B cell (primary cell): ENCODE measurements at regions of chr14 and their contacts with region 1.

Region 1: GRCh38 chr14:81220830-81221578 is at the start of gene GTF2A1:
- DNase-seq: peak; percentile 99
- ATAC-seq: peak; percentile 70
- H3K4me3 ChIP-seq: peak within 1 kb of the TSS; percentile 89 to 99 (median 97)
- H3K4me3 Mint-ChIP-seq: peak within 1 kb of the TSS; percentile 97
- H3K27ac ChIP-seq: peak within 1 kb of the TSS; percentile 98 to 99
- H3K27ac Mint-ChIP-seq: peak within 1 kb of the TSS; percentile 100
- H3K4me1 ChIP-seq: peaks cover 13 to 16% of the 10 kb centered on the region in 2 donors
- H3K4me1 Mint-ChIP-seq: peaks cover 32% of the 10 kb centered on the region
- H3K27me3 ChIP-seq: no peaks in the 10 kb centered on the region
- H3K27me3 Mint-ChIP-seq: no peaks in the 10 kb centered on the region
- CTCF ChIP-seq: no peak
- total RNA-seq, gene GTF2A1: 44.0 and 45.1 TPM in 2 replicates

Region 2: GRCh38 chr14:81170104-81170828 is 50.7 kb before region 1 on chr14:
- CTCF ChIA-PET with region 1: interaction called, 7 read pairs
- POLR2A ChIA-PET with region 1: interaction called, 4 read pairs
- intact Hi-C with region 1: loop called (anchors 1 kb)
- DNase-seq: peak; percentile 91
- ATAC-seq: peak; percentile 97
- H3K4me3 ChIP-seq: peak overlapping the region; percentile 39 to 73 (median 63)
- H3K4me3 Mint-ChIP-seq: peak overlapping the region; percentile 94
- H3K27ac ChIP-seq: peak overlapping the region; percentile 71 to 73
- H3K27ac Mint-ChIP-seq: peak overlapping the region; percentile 97
- H3K4me1 ChIP-seq: peaks cover 16 to 21% of the 10 kb centered on the region in 2 donors
- H3K4me1 Mint-ChIP-seq: peaks cover 46% of the 10 kb centered on the region
- H3K27me3 ChIP-seq: no peaks in the 10 kb centered on the region
- H3K27me3 Mint-ChIP-seq: no peaks in the 10 kb centered on the region
- CTCF ChIP-seq: peak; percentile 92

Region 3: DNA sequence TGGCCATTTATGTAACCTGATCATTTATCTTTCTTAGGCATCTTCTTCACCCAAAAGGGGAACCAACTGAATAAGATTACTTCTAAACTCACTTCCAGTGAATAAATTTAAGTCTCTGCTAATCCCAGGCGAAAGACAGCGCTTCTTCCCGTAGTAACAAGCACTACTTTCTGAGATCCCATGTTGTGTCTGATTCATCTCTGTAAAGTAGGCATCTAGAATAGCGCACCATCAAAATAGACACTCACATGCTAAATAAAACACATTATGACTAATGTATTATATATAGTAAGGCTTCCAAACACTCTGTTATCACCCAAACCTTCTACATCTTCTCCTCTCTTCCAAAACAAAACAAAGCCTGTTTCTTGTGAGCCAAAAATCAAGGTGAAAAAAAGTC is 15.4 kb before region 1 on chr14:
- CTCF ChIA-PET with region 1: no interaction called
- POLR2A ChIA-PET with region 1: no interaction called
- intact Hi-C with region 1: no loop called
- DNase-seq: no peak
- ATAC-seq: no peak
- H3K4me3 ChIP-seq: no peak overlapping the region
- H3K4me3 Mint-ChIP-seq: no peak overlapping the region
- H3K27ac ChIP-seq: no peak overlapping the region
- H3K27ac Mint-ChIP-seq: no peak overlapping the region
- H3K4me1 ChIP-seq: peaks cover 17 to 22% of the 10 kb centered on the region in 2 donors
- H3K4me1 Mint-ChIP-seq: peaks cover 41% of the 10 kb centered on the region
- H3K27me3 ChIP-seq: no peaks in the 10 kb centered on the region
- H3K27me3 Mint-ChIP-seq: no peaks in the 10 kb centered on the region
- CTCF ChIP-seq: no peak

Region 4: GRCh38 chr14:81533536-81534343 is 312.7 kb after region 1 on chr14 and contains the start of gene SEL1L:
- CTCF ChIA-PET with region 1: no interaction called
- POLR2A ChIA-PET with region 1: interaction called, 10 read pairs
- intact Hi-C with region 1: no loop called
- DNase-seq: peak; percentile 99
- ATAC-seq: peak; percentile 97
- H3K4me3 ChIP-seq: peak within 1 kb of the TSS; percentile 86 to 96 (median 92)
- H3K4me3 Mint-ChIP-seq: peak within 1 kb of the TSS; percentile 98
- H3K27ac ChIP-seq: peak within 1 kb of the TSS in 1 of 2 donors; percentile 77
- H3K27ac Mint-ChIP-seq: peak within 1 kb of the TSS; percentile 95
- H3K4me1 ChIP-seq: peaks cover 32% of the 10 kb centered on the region in 2 donors
- H3K4me1 Mint-ChIP-seq: peaks cover 54% of the 10 kb centered on the region
- H3K27me3 ChIP-seq: no peaks in the 10 kb centered on the region
- H3K27me3 Mint-ChIP-seq: no peaks in the 10 kb centered on the region
- CTCF ChIP-seq: no peak
- total RNA-seq, gene SEL1L: 50.0 and 53.8 TPM in 2 replicates